Sciatic nerve (tissue), 2 donors: ENCODE measurements at regions of chr6 and their contacts with region 1.

Region 1: GRCh38 chr6:11146117-11146826 is 34.7 kb upstream of the ERVFRD-1 start:
- DNase-seq: no peak
- ATAC-seq: no peak

Region 2: DNA sequence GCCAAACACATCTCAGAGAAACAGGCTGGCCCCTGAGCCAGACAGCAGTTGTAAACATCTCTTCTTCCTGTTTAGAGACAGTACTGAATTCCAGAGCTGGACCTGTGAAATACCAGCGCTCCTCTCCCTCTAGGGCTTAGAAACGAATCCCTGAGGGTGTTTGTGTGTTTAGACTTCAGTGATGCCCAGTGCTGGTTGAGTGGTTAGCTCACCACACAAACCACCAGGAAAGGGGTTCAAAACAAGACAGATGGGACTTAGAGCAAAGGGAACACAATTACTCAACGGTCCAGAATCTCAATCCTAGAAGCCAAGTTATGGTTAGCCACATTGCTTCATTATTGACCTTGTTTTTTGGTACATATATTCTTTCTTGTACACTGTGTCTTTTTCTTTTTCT is 282.6 kb after region 1 on chr6:
- intact Hi-C with region 1: no loop called
- DNase-seq: no peak
- ATAC-seq: peak; percentile 2

Region 3: GRCh38 chr6:11496152-11497060 is 350.1 kb after region 1 on chr6:
- intact Hi-C with region 1: loop called (anchors 5 kb)
- DNase-seq: peak; percentile 70
- ATAC-seq: peak; percentile 96